CD8-positive, alpha-beta T cell (primary cell): ENCODE measurements at regions of chr2 and their contacts with region 1.

Region 1: DNA sequence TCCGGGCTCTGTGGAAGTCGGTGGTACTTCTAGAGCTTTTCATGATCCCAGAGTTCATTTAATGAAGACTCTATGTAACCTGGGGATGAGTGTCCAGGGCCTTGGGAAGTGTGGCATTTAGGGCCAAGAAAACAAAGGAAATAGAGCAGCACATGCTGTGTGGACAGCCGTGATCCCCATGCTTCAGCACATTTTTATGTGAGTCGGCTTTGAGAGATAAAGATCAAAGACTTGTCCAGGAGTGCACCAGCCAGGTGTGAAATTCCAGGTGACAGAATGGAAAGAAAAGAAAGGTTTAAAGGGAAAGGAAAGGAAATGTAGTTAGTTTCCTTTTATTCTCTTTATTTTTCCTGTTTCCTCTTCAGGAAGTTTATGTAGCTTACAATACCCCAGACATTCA is 258.0 kb upstream of the NRP2 start:
- DNase-seq: no peak
- ATAC-seq: no peak
- H3K4me3 ChIP-seq: no peak overlapping the region
- H3K4me3 Mint-ChIP-seq: no peak overlapping the region
- H3K27ac ChIP-seq: no peak overlapping the region
- H3K27ac Mint-ChIP-seq: no peak overlapping the region
- H3K4me1 ChIP-seq: no peaks in the 10 kb centered on the region
- H3K4me1 Mint-ChIP-seq: no peaks in the 10 kb centered on the region
- H3K27me3 ChIP-seq: no peaks in the 10 kb centered on the region
- H3K27me3 Mint-ChIP-seq: peaks cover 4% of the 10 kb centered on the region
- CTCF ChIP-seq: no peak

Region 2: GRCh38 chr2:205347899-205348298 is 76.4 kb before region 1 on chr2:
- CTCF ChIA-PET with region 1: no interaction called
- POLR2A ChIA-PET with region 1: no interaction called
- intact Hi-C with region 1: loop called in 1 of 2 experiments (anchors 2 kb)
- DNase-seq: no peak
- ATAC-seq: no peak
- H3K4me3 ChIP-seq: no peak overlapping the region
- H3K4me3 Mint-ChIP-seq: no peak overlapping the region
- H3K27ac ChIP-seq: no peak overlapping the region
- H3K27ac Mint-ChIP-seq: no peak overlapping the region
- H3K4me1 ChIP-seq: no peaks in the 10 kb centered on the region
- H3K4me1 Mint-ChIP-seq: no peaks in the 10 kb centered on the region
- H3K27me3 ChIP-seq: no peaks in the 10 kb centered on the region
- H3K27me3 Mint-ChIP-seq: no peaks in the 10 kb centered on the region
- CTCF ChIP-seq: no peak